Astrocyte of the cerebellum (primary cell): ENCODE measurements at regions of chr3 and their contacts with region 1.

Region 1: DNA sequence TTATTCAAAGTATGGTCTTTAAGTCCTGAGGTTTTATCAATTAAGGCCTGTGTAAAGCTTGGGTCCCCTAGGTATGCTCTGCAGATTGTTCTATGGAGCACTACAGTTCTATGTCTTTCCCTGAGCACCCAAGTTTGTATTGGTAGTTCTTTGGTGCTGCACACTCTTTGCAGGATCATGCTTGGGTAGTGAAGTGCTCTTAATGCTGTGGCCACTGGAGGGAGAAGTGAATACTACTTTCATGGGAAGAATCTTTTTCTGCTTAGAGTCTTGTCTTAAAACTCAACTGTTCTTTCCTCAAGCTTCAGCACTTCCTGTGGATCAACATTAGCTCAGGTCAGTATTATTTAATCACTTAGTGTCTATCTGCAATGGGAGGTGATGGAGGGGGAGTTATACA is 93.6 kb upstream of the CFAP20DC start:
- DNase-seq: no peak
- H3K4me3 ChIP-seq: no peak overlapping the region
- CTCF ChIP-seq: no peak

Region 2: GRCh38 chr3:58670506-58671135 is 472.8 kb before region 1 on chr3:
- in situ Hi-C with region 1: no loop called
- DNase-seq: no peak
- H3K4me3 ChIP-seq: no peak overlapping the region
- CTCF ChIP-seq: no peak

Region 3: GRCh38 chr3:59192473-59192872 is 49.0 kb after region 1 on chr3:
- in situ Hi-C with region 1: loop called (anchors 5 kb)
- DNase-seq: peak; percentile 6
- H3K4me3 ChIP-seq: no peak overlapping the region
- CTCF ChIP-seq: no peak